Gastrocnemius medialis (tissue), 4 donors: ENCODE measurements at regions of chr1 and their contacts with region 1.

Region 1: GRCh38 chr1:204128964-204129896 is 22.6 kb downstream of the ETNK2 start:
- DNase-seq: peak; percentile 33 to 64
- ATAC-seq: peak; percentile 54 to 86
- H3K4me3 ChIP-seq: peak overlapping the region; percentile 23 to 55 (median 36)
- H3K27ac ChIP-seq: peak overlapping the region; percentile 1 to 45 (median 38)
- H3K4me1 ChIP-seq: peaks cover 14 to 32% of the 10 kb centered on the region in 2 donors
- H3K27me3 ChIP-seq: no peaks in the 10 kb centered on the region
- CTCF ChIP-seq: peak; percentile 86 to 97 (median 95)
- POLR2A ChIP-seq: no peak

Region 2: DNA sequence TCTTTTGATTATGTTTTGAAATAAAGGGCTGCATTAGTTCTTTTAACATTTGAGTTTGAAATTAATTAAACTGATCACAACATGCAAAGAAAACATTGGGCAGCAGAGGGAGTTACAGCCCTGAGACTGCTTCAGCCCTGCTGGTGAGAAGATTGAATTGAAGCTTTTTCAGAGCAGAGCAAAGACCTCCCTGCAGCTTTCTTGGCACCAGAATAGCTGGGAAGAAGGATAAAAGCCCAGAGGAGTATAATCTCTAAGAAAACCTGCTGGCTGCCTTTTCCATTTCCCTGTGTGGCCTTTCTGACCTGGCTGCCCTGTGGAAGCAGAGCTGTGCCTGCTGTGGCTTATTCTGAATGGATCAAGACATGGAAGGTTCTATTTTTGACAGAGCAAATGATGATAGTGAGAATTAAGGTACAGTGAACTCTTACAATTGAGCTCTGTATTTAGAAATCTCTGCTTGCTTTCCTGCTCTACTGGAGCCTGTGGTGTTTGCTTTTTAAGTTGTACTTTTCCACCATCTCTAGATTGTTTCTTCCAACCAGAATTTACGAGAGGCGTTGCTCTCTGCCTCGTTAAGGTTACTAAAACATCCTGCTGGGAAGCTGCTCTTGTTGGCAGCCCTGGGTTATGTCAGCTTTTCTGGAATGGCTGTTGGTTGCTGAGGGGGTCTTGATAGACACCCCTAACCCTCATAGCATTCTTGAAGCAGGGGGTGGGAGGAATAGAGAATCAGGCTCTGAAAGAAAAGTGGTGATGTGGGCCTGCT is 257.9 kb before region 1 on chr1:
- in situ Hi-C with region 1: loop called in 2 of 4 experiments (anchors 5 kb)
- intact Hi-C with region 1: no loop called
- DNase-seq: no peak
- ATAC-seq: peak; percentile 72 to 78
- H3K4me3 ChIP-seq: no peak overlapping the region
- H3K27ac ChIP-seq: peak overlapping the region in 1 of 4 donors; percentile 6
- H3K4me1 ChIP-seq: peaks cover 4 to 11% of the 10 kb centered on the region in 2 donors
- H3K27me3 ChIP-seq: no peaks in the 10 kb centered on the region
- CTCF ChIP-seq: peak; percentile 68 to 72 (median 69)
- POLR2A ChIP-seq: no peak

Region 3: DNA sequence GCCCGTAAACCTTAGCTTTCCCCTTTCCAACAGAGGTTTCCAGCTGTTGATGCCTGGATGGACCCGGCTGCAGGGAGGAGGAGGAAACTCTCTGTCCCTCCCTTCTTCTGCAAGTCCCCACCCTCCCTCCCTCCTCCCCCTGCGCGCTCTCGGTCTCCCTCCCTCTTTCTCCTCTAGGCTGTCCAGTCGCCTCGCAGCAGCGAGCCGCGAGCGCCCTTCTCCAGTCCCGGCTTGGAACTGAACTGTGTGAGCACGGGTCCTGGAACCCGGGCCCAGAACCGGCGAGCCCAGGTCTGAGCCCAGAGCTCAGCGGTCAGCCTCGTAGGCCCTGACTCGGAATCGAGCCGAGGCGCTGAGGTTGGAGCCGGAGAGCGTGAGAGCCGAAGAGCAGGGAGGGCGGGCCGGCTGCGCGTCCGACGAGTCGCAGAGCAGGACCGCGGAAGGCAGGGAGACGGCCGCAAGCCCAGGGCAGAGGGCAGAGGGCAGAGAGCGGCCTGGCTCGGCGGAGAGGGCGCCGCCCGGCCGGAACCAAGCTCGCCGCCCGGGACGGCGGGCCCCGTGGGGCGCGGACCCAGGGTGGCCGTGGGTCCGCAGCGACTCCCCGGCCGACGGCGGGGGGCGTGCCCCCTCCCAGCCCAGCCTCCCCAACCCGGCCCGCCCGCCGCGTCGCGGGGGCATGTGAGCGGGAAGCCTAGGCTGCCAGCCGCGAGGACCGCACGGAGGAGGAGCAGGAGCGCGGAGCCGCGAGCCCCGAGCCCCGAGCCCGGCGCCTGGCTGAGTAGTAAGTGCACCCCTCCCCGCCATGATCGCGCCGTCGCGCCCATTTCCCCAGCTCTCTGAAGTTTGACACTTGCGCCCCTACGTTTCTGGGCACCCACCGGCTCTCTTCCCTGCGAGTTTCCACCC is 56.0 kb before region 1 on chr1 and contains the start of gene SOX13:
- in situ Hi-C with region 1: loop called (anchors 5 to 10 kb)
- intact Hi-C with region 1: loop called (anchors 1 kb)
- DNase-seq: peak; percentile 79
- ATAC-seq: peak; percentile 77 to 80
- H3K4me3 ChIP-seq: peak within 1 kb of the TSS; percentile 85 to 91 (median 88)
- H3K27ac ChIP-seq: peak within 1 kb of the TSS; percentile 76 to 94 (median 90)
- H3K4me1 ChIP-seq: peaks cover 23 to 28% of the 10 kb centered on the region in 2 donors
- H3K27me3 ChIP-seq: no peaks in the 10 kb centered on the region
- CTCF ChIP-seq: peak in 2 of 5 experiments; percentile 25 to 31
- POLR2A ChIP-seq: peak; percentile 84 to 86
- total RNA-seq, gene SOX13: 15.6 to 31.1 (median 16.3) TPM